Esophagus muscularis mucosa (tissue), 4 donors: ENCODE measurements at regions of chr11 and their contacts with region 1.

Region 1: DNA sequence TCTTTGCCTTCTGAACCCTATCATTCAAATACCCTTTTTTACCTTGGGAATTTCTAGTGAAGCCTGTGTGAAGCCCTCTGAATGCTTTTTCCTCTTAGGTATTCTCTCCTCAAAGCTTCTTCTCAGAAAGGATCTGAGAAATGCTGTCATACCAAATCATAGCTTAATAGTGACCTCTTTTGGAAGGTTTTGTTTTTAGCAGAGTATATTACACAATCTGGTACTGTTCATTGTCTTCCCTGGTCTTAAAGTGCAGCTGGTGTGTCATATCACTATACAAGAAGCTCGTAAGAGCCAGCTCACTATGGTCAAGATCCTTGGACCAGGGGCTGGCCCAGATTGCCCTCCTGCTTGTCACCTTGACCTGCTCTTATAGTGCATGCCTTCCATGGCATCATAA is 204.4 kb upstream of the ANO5 start:
- DNase-seq: no peak
- H3K4me3 ChIP-seq: no peak overlapping the region
- H3K27ac ChIP-seq: no peak overlapping the region
- H3K4me1 ChIP-seq: no peaks in the 10 kb centered on the region
- H3K27me3 ChIP-seq: no peaks in the 10 kb centered on the region
- CTCF ChIP-seq: peak in 1 of 3 experiments; percentile 19
- EP300 ChIP-seq: no peak
- POLR2A ChIP-seq: no peak

Region 2: DNA sequence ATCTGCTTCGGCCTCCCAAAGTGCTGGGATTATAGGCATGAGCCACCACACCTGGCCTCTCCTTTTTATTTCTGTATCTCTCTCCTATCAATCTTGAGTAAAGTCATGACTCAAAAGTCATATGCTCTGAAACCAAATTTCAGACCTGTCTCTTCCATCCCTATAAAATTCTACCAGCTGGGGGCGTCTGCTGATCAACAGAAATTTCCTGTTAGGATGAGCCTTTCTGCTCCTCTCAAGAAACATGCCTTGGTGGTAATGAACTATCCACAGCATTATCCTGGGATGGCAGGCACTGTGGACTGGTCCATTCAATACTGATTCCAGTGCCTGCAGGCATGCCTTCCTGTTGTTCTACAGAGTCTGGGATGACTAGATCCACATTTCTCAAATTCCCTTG is 846.5 kb before region 1 on chr11:
- intact Hi-C with region 1: loop called (anchors 10 kb)
- DNase-seq: no peak
- H3K4me3 ChIP-seq: no peak overlapping the region
- H3K27ac ChIP-seq: no peak overlapping the region
- H3K4me1 ChIP-seq: no peaks in the 10 kb centered on the region
- H3K27me3 ChIP-seq: no peaks in the 10 kb centered on the region
- CTCF ChIP-seq: no peak
- EP300 ChIP-seq: no peak
- POLR2A ChIP-seq: no peak